ENCODE measurements at regions of chr3 and their contacts with region 1.

Region 1: DNA sequence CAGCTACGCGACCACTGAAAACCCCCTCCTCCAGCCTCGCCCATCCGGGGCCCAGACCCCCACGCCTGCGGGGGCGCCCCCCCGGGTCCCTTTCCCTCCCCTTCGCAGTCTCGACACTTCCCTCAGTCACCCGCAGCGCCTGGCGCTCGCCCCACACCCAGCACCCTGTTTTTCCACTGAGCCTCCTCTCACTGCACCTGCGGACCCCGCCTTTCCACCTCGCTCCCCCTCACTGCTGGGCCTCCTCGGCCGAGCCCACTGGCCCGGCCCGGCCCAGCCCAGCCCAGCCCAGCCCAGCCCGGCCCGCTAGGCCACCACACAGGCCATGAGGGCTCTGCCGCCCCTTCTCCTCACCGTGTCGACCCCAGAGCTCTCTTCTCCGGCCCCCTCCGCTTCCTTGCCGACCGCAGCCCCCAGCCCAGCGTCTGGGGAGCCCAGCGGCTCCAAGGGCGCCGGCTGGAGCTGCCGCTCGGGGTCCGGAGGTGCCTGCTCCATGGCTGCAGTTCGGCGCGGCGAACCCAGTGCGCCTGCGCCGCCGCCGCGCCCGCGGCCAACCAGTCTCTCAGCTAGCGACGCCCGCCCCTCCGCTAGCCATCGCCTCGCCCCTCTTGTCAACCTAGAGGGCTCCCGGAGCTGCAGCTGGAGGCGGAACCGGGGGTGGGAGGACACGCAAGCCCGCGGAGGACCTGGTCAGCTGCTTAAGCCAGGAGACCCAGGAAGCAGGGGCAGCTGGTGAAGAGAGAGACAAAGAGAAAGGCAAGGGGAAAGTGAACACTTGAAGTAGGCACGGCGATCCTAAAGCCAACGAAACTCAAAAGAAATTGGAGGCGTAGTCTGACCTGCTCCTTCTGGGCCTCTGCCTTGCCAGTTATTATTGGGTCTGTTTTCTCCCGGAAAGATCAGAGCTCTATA is at the start of gene SNX4:
- DNase-seq: peak; percentile 90
- H3K4me3 ChIP-seq: peak within 1 kb of the TSS; percentile 80
- H3K27ac ChIP-seq: no peak within 1 kb of the TSS
- H3K4me1 ChIP-seq: peaks cover 10% of the 10 kb centered on the region
- CTCF ChIP-seq: peak; percentile 26; the same call in 1 of the 2 replicates
- total RNA-seq, gene SNX4: 28.2 and 43.2 TPM in 2 replicates

Region 2: DNA sequence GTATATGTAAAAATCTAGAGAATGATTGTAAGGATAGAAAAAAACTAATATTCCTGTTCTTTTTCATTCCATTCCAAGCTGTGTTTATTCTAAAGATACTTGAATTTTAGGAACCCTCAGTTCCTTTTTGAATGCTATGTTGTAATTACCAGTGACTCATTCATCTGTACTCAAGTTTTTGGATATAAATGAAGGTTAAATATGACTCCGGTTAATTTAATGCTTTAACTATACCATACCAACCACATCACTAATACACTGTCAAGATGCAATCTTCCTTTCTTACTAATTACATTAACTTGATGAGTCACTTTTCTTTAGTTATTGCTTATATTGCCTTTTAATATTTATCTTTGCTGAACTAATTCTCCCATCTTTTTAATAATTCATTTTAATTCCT is 76.0 kb before region 1 on chr3:
- CTCF ChIA-PET with region 1: no interaction called
- POLR2A ChIA-PET with region 1: no interaction called
- intact Hi-C with region 1: no loop called
- DNase-seq: no peak
- H3K4me3 ChIP-seq: no peak overlapping the region
- H3K27ac ChIP-seq: no peak overlapping the region
- H3K4me1 ChIP-seq: no peaks in the 10 kb centered on the region
- CTCF ChIP-seq: no peak

Region 3: DNA sequence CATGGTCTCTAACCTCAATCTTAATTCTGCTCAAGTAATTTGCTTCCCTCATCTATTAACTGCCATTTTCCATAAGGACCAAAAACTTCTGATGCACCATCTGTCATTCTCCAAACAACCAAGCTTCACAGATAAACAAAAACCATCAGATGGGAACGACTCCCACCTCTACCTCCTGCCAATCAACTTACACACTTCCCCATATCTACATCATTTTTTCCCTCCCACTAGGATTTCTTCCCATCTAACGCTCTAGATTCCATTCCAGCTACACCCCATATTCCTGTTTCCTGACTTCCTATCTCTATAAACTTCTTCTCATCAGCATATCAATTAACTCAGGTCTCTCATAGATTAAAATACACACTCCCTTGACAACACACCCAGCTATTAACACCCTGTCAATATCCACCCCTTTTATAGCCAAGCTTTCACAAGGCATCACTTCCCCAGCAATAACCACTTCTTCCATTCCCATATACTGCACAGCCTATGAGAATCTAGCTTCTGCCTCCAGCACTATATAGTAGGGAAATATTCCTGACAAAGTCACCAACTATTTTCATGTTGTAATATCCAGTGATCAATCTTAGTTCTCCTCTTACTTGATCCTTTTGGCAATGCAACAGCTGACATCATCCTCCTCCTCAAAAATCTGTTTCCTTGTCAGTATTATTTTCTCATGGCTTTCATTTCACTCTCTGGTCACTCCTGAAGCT is 39.1 kb before region 1 on chr3:
- CTCF ChIA-PET with region 1: no interaction called
- POLR2A ChIA-PET with region 1: no interaction called
- intact Hi-C with region 1: no loop called
- DNase-seq: no peak
- H3K4me3 ChIP-seq: no peak overlapping the region
- H3K27ac ChIP-seq: no peak overlapping the region
- H3K4me1 ChIP-seq: no peaks in the 10 kb centered on the region
- CTCF ChIP-seq: no peak

Region 4: GRCh38 chr3:125556314-125556713 is 36.4 kb after region 1 on chr3:
- CTCF ChIA-PET with region 1: no interaction called
- POLR2A ChIA-PET with region 1: interaction called, 14 read pairs
- intact Hi-C with region 1: no loop called
- DNase-seq: no peak
- H3K4me3 ChIP-seq: no peak overlapping the region
- H3K27ac ChIP-seq: no peak overlapping the region
- H3K4me1 ChIP-seq: no peaks in the 10 kb centered on the region
- CTCF ChIP-seq: no peak

Region 5: DNA sequence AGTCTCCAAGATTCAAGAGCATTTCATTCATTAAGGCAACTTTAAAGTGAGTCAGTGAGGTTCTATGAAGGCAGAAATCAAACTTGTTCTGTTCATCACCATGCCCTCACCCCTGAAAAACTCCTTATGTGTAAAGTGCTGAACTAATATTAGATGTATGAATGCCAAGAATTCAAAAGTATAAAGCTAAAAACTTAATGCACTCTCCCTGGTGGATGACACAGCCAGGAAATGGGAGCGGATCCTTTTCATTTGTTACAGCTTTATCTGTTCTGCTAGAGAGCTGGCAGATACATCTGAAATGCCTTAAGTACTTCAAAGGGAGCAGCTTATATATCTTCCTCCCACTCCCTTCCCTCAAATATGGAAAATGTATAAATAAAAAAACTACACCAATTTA is 1126.7 kb after region 1 on chr3:
- CTCF ChIA-PET with region 1: no interaction called
- POLR2A ChIA-PET with region 1: no interaction called
- intact Hi-C with region 1: no loop called
- DNase-seq: no peak
- H3K4me3 ChIP-seq: no peak overlapping the region
- H3K27ac ChIP-seq: no peak overlapping the region
- H3K4me1 ChIP-seq: no peaks in the 10 kb centered on the region
- CTCF ChIP-seq: no peak